Keratinocyte (primary cell): ENCODE measurements at regions of chr1 and their contacts with region 1.

Region 1: DNA sequence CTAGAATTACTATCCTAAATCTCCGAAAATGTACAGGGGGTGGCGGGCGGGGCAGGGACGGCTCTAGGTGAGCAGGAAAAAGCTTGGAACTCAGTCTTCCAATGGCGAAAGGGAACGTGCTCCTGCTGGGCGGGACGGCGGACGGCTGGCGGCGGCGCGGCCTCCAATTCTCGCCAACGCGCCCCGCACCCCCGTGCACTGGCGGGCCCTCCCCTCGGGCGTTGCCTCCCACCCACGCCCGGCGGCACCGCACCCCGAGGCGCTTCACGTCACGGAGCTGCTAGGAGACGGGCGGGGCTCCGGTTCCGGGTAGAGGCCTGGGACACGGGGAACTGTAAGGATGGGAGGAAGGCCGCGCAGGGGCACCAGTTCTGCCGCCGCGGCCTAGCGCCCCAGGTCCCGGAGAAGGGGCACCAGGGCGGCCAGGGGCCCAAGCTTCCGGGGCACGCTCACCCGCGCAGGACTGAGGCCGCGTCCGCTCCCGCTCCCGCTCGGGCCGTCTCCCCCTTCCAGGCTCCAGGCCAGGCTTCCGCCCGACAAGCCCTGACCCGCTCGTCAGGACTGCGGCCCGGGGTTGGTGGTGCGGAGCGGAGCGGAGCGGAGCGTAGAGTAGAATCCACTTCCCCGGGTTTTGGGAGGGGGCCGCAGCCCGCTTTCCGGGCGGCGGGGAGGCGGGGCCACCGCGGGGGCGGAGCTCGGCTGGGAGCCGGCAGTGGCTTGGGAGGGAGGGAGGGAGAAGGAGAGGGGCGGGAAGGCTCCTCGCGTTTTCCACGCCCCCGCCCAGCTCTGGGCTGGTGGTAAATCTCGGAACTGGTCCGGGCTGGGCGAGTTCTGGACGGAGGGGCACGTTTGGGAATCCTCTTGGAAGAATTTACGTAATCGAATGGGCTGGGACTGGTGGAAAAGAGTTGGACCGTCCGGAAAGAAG is at the start of gene DDX59:
- DNase-seq: peak; percentile 87
- H3K4me3 ChIP-seq: peak within 1 kb of the TSS; percentile 59 to 83 (median 75)
- H3K27ac ChIP-seq: peak within 1 kb of the TSS; percentile 97
- H3K4me1 ChIP-seq: peaks cover 51% of the 10 kb centered on the region
- H3K27me3 ChIP-seq: no peaks in the 10 kb centered on the region
- CTCF ChIP-seq: no peak
- polyA plus RNA-seq, gene DDX59: 10.1 to 14.4 TPM (median 12.7 TPM) in 3 replicates

Region 2: GRCh38 chr1:200588698-200589097 is 80.9 kb before region 1 on chr1:
- dilution Hi-C with region 1: no loop called
- DNase-seq: no peak
- H3K4me3 ChIP-seq: no peak overlapping the region
- H3K27ac ChIP-seq: no peak overlapping the region
- H3K4me1 ChIP-seq: no peaks in the 10 kb centered on the region
- H3K27me3 ChIP-seq: no peaks in the 10 kb centered on the region
- CTCF ChIP-seq: no peak

Region 3: DNA sequence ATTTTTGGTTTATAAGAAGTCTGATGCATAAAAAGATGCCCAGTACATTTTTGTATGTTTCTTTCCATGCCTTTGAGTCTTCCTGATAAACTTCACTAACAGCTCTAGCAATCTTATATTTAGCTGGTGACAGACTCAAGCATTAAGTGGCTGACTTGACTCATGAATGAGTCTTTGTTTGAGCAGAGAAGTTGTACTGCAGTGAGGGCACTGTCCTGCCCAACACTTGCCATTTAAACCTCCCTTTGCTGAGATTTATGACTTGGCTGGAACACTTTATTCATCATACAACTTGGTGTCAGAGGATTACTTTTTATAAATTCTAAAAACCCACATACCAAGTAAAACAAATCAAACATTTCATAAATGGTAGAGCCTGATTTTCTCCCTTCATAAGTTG is 54.5 kb after region 1 on chr1:
- dilution Hi-C with region 1: loop called (anchors 10 kb)
- DNase-seq: no peak
- H3K4me3 ChIP-seq: no peak overlapping the region
- H3K27ac ChIP-seq: no peak overlapping the region
- H3K4me1 ChIP-seq: no peaks in the 10 kb centered on the region
- H3K27me3 ChIP-seq: no peaks in the 10 kb centered on the region
- CTCF ChIP-seq: no peak